ENCODE measurements at regions of chrX and their contacts with region 1.

Region 1: DNA sequence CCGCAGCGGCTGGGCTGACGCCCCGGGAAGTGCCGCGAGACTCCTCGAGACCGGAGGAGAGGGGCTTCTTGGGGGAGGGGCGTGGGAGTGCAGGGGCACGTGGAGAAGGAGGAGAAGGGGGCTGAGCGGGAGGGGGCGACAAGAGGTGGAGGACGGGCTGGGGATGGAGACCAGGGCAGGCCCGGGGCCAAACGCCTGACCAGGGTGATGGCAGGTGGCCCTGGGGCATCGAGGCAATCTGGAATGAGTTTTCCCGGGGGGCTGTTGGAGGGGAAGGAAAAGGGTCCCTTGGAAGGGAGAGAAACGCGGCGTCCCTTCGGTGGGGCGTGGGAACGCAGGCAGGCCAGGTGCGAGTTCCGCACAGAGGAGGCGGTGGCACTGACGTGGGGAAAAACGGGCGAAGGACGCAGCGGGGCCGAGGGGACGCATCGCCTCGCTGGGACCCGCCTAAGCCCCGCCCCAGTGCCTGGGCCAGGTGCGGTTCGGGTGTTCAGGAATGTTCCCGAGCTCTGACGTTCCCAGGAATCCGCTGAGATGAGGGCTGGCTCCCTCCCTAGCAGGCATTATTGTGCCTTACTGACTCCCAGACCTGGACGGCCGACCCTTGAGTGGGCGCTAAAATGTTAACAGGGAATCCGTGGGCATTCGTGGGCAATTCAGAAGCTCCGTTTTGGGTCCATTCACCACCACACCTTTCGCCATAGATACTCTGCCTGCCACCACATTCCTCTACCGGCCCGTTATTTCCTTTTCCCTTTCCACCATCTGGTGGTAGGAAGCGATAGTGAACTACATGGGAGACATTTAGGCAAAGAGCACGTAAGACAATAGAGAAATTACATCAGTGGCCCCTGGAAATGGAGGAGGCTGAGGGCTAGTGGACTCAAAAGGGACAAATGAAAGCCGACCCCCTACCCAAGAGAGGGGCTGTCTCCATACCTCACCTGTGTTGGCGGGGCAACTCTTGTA is 795 bp upstream of the SH3KBP1 start:
- DNase-seq: peak; percentile 80
- H3K4me3 ChIP-seq: peak overlapping the region; percentile 69
- H3K27ac ChIP-seq: peak overlapping the region; percentile 72
- H3K4me1 ChIP-seq: peaks cover 11% of the 10 kb centered on the region; the same call in 1 of the 2 replicates
- H3K27me3 ChIP-seq: no peaks in the 10 kb centered on the region

Region 2: GRCh38 chrX:19593690-19594089 is 294.5 kb before region 1 on chrX:
- in situ Hi-C with region 1: loop called (anchors 25 kb)
- DNase-seq: peak; percentile 74
- H3K4me3 ChIP-seq: no peak overlapping the region
- H3K27ac ChIP-seq: peak overlapping the region; percentile 45; the same call in 1 of the 2 replicates
- H3K4me1 ChIP-seq: peaks cover 31% of the 10 kb centered on the region
- H3K27me3 ChIP-seq: no peaks in the 10 kb centered on the region

Region 3: DNA sequence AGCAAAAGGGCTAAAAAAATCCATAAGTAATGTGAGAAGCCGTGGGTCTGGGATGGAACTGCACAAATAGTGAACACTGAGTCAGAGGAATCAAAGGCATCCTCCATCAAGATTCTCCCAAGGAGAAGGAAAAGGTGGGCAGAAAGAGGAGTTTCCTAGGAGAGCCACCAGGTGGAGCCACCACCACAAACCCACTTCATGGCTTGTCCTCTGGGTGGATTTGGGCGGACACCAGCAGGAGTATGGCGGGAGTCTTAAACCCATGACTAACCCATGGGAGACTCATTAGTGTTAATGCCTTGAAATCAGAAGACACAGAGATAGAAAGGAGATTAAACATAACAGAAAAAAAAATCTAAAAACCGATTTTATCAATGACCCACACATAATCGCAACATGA is 148.5 kb before region 1 on chrX:
- in situ Hi-C with region 1: loop called (anchors 10 kb)
- DNase-seq: peak; percentile 82
- H3K4me3 ChIP-seq: no peak overlapping the region
- H3K27ac ChIP-seq: 0 out of 2 replicates have a peak overlapping the region, but pooled peaks have one; percentile 21
- H3K4me1 ChIP-seq: no peaks in the 10 kb centered on the region; the same call in 1 of the 2 replicates
- H3K27me3 ChIP-seq: no peaks in the 10 kb centered on the region

Region 4: DNA sequence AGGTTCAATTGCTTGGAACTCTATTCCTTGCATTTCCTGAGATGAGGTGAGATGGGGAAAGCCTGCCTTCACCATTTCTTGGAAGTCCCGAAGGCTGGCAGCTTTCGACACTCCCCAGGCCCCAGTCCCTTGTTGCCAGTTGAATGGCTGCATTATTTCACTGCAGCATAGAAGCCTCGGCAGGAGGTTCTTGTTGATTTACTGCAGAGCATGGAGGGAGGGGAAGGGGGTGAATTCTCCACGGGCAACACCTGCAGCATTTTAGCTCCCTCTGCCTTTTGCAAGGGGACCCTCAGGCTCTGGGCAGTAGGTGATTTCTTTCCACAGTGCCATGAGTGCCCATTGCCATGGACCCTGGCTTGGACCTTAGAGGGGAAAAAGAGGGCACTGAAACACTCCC is 113.4 kb after region 1 on chrX:
- in situ Hi-C with region 1: no loop called
- DNase-seq: no peak
- H3K4me3 ChIP-seq: no peak overlapping the region
- H3K27ac ChIP-seq: no peak overlapping the region
- H3K4me1 ChIP-seq: no peaks in the 10 kb centered on the region
- H3K27me3 ChIP-seq: no peaks in the 10 kb centered on the region

Measured in GM23248 (cell line).